Mammary epithelial cell (primary cell): ENCODE measurements at regions of chr11 and their contacts with region 1.

Region 1: DNA sequence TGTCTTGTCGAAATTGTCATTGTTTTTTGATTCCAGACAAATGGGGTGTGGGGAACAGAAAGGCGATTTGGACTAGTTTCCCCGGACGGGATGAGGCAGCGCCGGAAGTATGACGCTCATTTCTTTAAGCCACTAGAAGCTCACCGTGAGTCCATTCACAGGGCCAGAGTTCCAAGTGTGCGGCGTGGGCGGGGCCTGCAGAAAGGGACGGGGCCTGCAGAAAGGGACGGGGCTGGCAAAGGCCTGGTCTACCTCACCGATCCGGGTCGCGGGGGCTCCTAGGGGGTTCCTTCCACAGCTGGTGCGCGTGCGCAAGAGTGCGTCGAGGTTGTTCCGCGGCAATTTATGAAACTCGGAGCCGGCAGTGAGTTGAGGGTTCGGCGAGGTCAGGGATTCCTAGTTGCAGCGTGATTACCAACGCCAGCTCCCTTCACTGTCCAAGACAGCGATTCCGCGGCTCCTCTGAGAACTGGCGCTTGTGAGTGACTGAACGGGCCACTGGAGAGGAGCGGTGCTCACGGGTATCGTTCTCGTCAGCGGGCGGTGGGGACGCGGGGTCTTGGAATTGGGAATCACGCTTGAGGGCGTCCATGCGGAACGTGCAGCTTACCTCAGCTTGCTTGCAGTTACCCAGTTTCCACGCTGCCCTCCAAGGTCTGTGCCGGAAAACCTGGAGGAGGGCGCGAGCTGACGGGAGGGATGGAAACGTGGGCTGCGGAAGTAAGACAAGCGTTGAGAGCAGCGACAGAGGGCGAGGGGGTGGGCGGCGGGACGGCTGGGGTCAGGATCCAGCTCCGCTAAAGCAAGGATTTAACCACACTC is at the start of gene ZNF215:
- DNase-seq: peak; percentile 88
- H3K4me3 ChIP-seq: peak within 1 kb of the TSS; percentile 45 to 76 (median 61)
- H3K27ac ChIP-seq: peak within 1 kb of the TSS; percentile 42
- H3K4me1 ChIP-seq: peaks cover 6% of the 10 kb centered on the region
- H3K27me3 ChIP-seq: no peaks in the 10 kb centered on the region
- CTCF ChIP-seq: no peak
- total RNA-seq, gene ZNF215: 8.0 to 10.0 TPM

Region 2: GRCh38 chr11:6979365-6979978 is 53.1 kb after region 1 on chr11:
- CTCF ChIA-PET with region 1: no interaction called
- dilution Hi-C with region 1: no loop called
- in situ Hi-C with region 1: no loop called
- intact Hi-C with region 1: no loop called
- DNase-seq: no peak
- H3K4me3 ChIP-seq: no peak overlapping the region
- H3K27ac ChIP-seq: no peak overlapping the region
- H3K4me1 ChIP-seq: no peaks in the 10 kb centered on the region
- H3K27me3 ChIP-seq: no peaks in the 10 kb centered on the region
- CTCF ChIP-seq: no peak

Region 3: DNA sequence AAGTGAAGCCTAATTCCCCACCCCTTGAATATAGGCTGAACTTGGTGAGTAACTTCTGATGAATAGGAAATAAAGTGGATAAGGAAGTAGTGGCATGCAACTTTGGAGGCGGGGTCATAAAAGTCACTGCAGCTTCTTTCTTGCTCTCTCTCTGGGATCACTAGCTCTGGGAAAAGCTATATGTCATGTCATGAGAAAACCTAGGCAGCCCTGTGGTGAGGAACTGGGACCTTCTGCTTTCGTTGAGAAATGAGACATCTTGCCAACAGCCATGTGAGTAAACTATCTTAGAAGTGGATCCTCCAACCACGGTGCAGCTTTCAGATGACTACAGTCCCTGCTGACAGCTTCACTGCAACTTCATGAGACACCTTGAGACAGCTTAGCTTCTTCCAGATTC is 78.1 kb after region 1 on chr11:
- CTCF ChIA-PET with region 1: no interaction called
- dilution Hi-C with region 1: no loop called
- in situ Hi-C with region 1: no loop called
- intact Hi-C with region 1: loop called (anchors 5 kb)
- DNase-seq: peak; percentile 61
- H3K4me3 ChIP-seq: no peak overlapping the region
- H3K27ac ChIP-seq: no peak overlapping the region
- H3K4me1 ChIP-seq: peaks cover 5% of the 10 kb centered on the region
- H3K27me3 ChIP-seq: no peaks in the 10 kb centered on the region
- CTCF ChIP-seq: no peak

Region 4: DNA sequence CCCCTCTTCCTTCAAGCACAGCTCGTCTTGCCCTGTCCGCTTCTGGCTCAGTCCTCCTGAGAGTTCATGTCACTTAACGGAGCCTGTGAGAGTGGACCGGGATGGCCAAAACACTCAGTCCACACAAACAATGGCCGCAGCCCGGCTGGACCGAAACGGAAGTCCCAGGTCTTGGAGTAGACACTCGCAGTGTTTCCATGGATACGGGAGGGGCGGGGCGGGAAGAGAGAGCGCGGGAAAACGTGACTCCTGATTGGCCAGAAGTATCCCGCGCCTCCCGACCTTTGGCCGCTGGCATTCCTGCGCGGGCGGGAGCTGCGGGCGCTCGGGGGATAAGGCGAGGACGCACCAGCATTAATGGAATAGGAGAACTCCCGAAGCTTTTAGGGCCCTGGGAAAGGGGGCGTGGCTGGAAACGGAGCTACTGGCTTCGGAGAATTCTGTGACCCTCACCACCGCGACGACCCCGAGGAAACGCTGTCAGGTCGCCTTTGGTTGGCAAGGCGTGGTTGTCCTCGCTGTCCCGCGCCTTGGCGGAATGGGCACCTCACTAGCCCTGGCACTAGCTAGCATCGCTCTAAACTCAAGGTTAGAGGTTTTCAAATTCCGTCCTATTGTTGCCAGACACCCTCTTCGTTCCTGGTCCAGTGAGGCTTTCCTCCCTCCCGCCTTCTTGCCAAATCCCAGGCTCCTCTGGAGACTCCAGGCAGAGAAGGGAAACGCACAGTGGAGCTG is 93.9 kb after region 1 on chr11 and contains the starts of genes NLRP14 and ZNF214:
- CTCF ChIA-PET with region 1: no interaction called
- dilution Hi-C with region 1: no loop called
- in situ Hi-C with region 1: no loop called
- intact Hi-C with region 1: loop called (anchors 1 kb)
- DNase-seq: peak; percentile 88
- H3K4me3 ChIP-seq: peak within 1 kb of the TSS; percentile 64 to 77 (median 71)
- H3K27ac ChIP-seq: peak within 1 kb of the TSS; percentile 79
- H3K4me1 ChIP-seq: peaks cover 9% of the 10 kb centered on the region
- H3K27me3 ChIP-seq: no peaks in the 10 kb centered on the region
- CTCF ChIP-seq: no peak
- total RNA-seq, gene NLRP14: 0.14 to 0.33 TPM
- total RNA-seq, gene ZNF214: 3.0 to 5.2 TPM